ENCODE measurements at regions of chrX and their contacts with region 1.

Region 1: DNA sequence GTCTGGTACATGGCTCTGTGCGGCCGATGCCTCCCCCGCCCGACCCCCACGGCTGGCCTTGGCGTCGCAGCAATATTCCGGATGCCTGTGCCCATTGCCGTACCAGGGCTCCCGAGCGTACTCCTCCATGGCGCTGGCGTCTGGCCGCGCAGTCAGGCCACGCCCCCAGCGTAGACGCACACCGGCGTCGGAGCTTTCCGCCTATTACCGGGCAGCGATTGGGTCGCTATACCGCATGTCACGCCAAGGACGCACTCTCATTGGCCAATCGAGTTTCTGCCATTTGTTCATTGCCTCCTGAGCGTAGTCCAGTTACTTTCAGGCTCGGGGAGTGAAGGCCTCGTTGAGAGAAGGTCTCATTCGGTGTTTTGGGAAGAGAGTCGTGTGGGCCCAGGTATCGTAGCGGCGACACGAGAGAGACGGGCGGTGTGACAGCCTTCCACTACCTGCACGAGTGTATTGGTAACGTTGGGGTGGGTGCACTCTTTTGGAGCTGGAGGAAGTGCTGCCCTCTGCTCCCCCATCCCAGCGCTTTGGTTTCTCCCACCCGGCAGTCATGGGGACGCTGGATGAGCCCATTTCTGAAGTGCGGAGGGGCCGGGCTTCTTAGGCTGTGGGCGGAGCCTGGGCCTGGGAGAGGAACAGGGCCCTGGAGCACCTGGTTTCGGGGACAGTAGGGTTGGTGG is at the starts of genes PQBP1 and TIMM17B:
- DNase-seq: peak; percentile 93
- ATAC-seq: peak; percentile 94
- H3K4me3 ChIP-seq: peak within 1 kb of the TSS; percentile 72 to 80 (median 75); a peak in 5 of 6 replicates
- H3K27ac ChIP-seq: peak within 1 kb of the TSS; percentile 93
- H3K4me1 ChIP-seq: peaks cover 30% of the 10 kb centered on the region
- H3K27me3 ChIP-seq: no peaks in the 10 kb centered on the region
- CTCF ChIP-seq: no peak
- EP300 ChIP-seq: no peak
- POLR2A ChIP-seq: peak in 1 of 2 experiments; percentile 94; a peak in 2 of 4 replicates
- RAD21 ChIP-seq: no peak
- total RNA-seq, gene PQBP1: 80.9 and 99.4 TPM in 2 replicates
- total RNA-seq, gene TIMM17B: 53.4 and 56.0 TPM in 2 replicates

Region 2: GRCh38 chrX:48770296-48770695 is 127.5 kb before region 1 on chrX:
- CTCF ChIA-PET with region 1: no interaction called
- POLR2A ChIA-PET with region 1: no interaction called
- in situ Hi-C with region 1: no loop called
- intact Hi-C with region 1: no loop called
- DNase-seq: no peak
- ATAC-seq: no peak
- H3K4me3 ChIP-seq: no peak overlapping the region
- H3K27ac ChIP-seq: no peak overlapping the region
- H3K4me1 ChIP-seq: peaks cover 7% of the 10 kb centered on the region; the same call in 1 of the 2 replicates
- H3K27me3 ChIP-seq: no peaks in the 10 kb centered on the region
- CTCF ChIP-seq: no peak
- EP300 ChIP-seq: no peak
- POLR2A ChIP-seq: no peak
- RAD21 ChIP-seq: no peak

Region 3: DNA sequence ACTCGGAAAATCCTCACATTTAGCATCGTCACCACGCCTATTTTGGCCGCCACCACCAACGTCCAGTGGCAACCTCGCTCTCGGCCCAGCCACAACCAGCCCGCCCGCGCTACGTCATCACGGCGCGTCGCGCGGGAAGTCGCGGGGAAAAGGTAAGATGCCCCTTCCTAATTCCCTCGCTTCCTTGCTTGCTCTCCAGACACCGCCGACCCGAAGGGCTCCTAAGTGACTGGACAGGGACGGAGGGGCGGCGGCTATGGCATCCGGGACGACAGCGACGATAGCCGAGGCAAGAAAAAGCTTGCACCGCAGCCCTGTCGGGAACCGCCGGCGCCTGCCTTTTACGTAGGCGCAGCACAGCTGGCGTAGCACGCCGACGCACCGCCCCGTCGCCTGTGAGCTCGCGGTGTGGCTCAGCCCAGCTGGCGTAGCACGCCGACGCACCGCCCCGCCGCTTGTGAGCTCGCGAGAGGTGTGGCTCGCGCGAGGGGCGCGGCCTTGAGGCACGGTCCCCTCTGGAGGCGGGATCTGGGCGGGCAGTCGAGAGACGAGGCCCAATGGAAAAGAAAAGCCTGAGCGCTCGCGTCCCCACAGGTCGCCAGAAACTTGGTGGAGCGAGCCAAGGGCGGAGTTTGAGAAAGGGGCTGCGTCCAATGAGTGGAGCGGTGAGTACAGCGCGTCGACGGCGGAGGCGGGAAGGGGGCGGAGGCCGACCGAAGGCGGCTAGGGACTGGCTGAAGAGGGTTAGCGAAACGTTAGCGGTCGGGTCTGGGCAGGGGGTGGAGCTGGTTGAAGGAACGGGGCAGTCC is 96.3 kb before region 1 on chrX and contains the start of gene HDAC6:
- CTCF ChIA-PET with region 1: no interaction called
- POLR2A ChIA-PET with region 1: interaction called, 11 read pairs
- in situ Hi-C with region 1: no loop called
- intact Hi-C with region 1: no loop called
- DNase-seq: peak; percentile 95
- ATAC-seq: peak; percentile 91
- H3K4me3 ChIP-seq: peak within 1 kb of the TSS; percentile 80 to 84 (median 81)
- H3K27ac ChIP-seq: peak within 1 kb of the TSS; percentile 98
- H3K4me1 ChIP-seq: peaks cover 38% of the 10 kb centered on the region
- H3K27me3 ChIP-seq: no peaks in the 10 kb centered on the region; a peak in 1 of 5 replicates
- CTCF ChIP-seq: no peak
- EP300 ChIP-seq: no peak
- POLR2A ChIP-seq: peak in 1 of 2 experiments; percentile 44; a peak in 2 of 4 replicates
- RAD21 ChIP-seq: no peak
- total RNA-seq, gene HDAC6: 57.8 and 80.4 TPM in 2 replicates

Region 4: GRCh38 chrX:48911412-48912182 is 13.8 kb after region 1 on chrX and contains the start of gene SLC35A2:
- CTCF ChIA-PET with region 1: interaction called, 3 read pairs
- POLR2A ChIA-PET with region 1: interaction called, 42 read pairs
- in situ Hi-C with region 1: no loop called
- intact Hi-C with region 1: loop called (anchors 2 kb)
- DNase-seq: peak; percentile 85
- ATAC-seq: peak; percentile 89
- H3K4me3 ChIP-seq: peak within 1 kb of the TSS; percentile 79 to 82 (median 81)
- H3K27ac ChIP-seq: peak within 1 kb of the TSS; percentile 81
- H3K4me1 ChIP-seq: peaks cover 35% of the 10 kb centered on the region
- H3K27me3 ChIP-seq: no peaks in the 10 kb centered on the region; a peak in 1 of 5 replicates
- CTCF ChIP-seq: no peak
- EP300 ChIP-seq: no peak
- POLR2A ChIP-seq: peak in 1 of 2 experiments; percentile 42; a peak in 1 of 4 replicates
- RAD21 ChIP-seq: no peak
- total RNA-seq, gene SLC35A2: 17.2 and 32.1 TPM in 2 replicates

Measured in HepG2 (cell line).